ENCODE measurements at regions of chr6 and their contacts with region 1.

Region 1: GRCh38 chr6:35731736-35732532 is 4.9 kb upstream of the ARMC12 start:
- DNase-seq: peak; percentile 97
- ATAC-seq: peak; percentile 62
- H3K4me3 Mint-ChIP-seq: peak overlapping the region; percentile 88
- H3K27ac Mint-ChIP-seq: peak overlapping the region; percentile 99
- H3K4me1 Mint-ChIP-seq: peaks cover 49% of the 10 kb centered on the region
- H3K27me3 Mint-ChIP-seq: no peaks in the 10 kb centered on the region

Region 2: DNA sequence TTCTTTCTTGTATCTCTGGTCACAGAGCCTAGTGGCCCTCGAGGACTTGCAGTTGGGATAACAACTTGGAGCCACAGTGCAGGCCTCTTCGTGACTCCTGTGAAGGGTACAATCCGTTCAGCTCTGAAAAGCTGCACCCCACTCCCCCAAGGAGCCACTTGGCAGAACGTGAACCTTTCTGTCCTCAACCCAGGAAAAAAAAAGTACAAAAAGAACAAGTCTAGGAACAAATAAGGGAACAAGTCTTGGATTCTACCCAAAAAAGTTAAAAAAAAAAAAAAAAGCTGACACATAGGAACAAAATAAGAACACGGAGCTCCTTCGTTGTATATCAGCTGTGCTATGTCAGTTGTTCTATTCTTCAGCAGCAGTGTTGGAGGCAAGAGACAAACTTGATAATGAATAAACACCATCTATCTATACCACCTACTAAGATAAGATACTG is 141.3 kb before region 1 on chr6:
- POLR2A ChIA-PET with region 1: interaction called, 10 read pairs
- DNase-seq: no peak
- ATAC-seq: no peak
- H3K4me3 Mint-ChIP-seq: no peak overlapping the region
- H3K27ac Mint-ChIP-seq: peak overlapping the region; percentile 27
- H3K4me1 Mint-ChIP-seq: peaks cover 39% of the 10 kb centered on the region
- H3K27me3 Mint-ChIP-seq: no peaks in the 10 kb centered on the region

Region 3: GRCh38 chr6:35669451-35670045 is 62.4 kb before region 1 on chr6:
- POLR2A ChIA-PET with region 1: interaction called, 19 read pairs
- DNase-seq: no peak
- ATAC-seq: peak; percentile 72
- H3K4me3 Mint-ChIP-seq: peak overlapping the region; percentile 75
- H3K27ac Mint-ChIP-seq: peak overlapping the region; percentile 87
- H3K4me1 Mint-ChIP-seq: peaks cover 29% of the 10 kb centered on the region
- H3K27me3 Mint-ChIP-seq: no peaks in the 10 kb centered on the region

Region 4: DNA sequence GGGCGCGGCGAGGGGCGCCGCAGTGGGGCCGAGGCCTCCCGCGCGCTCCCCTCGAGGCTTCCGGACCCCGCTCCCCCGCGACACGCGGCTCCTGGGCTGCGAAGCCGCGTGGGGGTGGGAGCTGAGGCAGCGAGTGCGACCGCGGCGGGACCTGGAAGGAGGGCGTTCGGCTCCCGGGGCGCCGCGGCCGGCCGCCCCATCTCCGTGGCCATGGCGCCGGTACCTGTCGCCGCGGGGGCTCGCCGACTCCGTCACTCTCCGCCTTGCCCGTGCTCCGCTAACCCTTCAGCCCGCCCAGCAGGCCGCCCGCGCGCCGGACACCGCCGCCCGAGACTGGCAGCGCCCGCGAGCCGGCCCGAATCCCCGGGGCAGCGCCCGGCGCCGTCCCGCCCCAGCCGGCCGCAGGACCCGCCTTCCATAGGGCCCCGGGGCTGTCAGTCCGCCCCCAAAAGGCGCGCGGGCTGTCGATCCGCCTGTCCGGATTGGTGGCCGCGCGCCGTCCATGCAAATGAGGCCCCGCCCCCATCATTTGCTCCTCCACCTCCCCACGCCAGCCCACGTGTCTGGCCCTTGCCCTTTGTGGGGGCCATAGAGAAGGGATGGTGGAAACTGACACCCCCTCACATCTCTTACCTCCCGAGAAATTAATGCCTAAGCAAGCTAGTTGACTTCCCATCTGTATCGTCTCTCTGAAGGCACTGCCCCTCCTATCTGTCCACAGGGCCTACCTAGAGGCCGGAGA is 43.2 kb before region 1 on chr6 and contains the start of gene FKBP5:
- POLR2A ChIA-PET with region 1: interaction called, 25 read pairs
- DNase-seq: peak; percentile 92
- ATAC-seq: peak; percentile 92
- H3K4me3 Mint-ChIP-seq: peak within 1 kb of the TSS; percentile 100
- H3K27ac Mint-ChIP-seq: peak within 1 kb of the TSS; percentile 98
- H3K4me1 Mint-ChIP-seq: peaks cover 8% of the 10 kb centered on the region
- H3K27me3 Mint-ChIP-seq: no peaks in the 10 kb centered on the region
- total RNA-seq, gene FKBP5: 78.6 to 79.8 TPM

Region 5: DNA sequence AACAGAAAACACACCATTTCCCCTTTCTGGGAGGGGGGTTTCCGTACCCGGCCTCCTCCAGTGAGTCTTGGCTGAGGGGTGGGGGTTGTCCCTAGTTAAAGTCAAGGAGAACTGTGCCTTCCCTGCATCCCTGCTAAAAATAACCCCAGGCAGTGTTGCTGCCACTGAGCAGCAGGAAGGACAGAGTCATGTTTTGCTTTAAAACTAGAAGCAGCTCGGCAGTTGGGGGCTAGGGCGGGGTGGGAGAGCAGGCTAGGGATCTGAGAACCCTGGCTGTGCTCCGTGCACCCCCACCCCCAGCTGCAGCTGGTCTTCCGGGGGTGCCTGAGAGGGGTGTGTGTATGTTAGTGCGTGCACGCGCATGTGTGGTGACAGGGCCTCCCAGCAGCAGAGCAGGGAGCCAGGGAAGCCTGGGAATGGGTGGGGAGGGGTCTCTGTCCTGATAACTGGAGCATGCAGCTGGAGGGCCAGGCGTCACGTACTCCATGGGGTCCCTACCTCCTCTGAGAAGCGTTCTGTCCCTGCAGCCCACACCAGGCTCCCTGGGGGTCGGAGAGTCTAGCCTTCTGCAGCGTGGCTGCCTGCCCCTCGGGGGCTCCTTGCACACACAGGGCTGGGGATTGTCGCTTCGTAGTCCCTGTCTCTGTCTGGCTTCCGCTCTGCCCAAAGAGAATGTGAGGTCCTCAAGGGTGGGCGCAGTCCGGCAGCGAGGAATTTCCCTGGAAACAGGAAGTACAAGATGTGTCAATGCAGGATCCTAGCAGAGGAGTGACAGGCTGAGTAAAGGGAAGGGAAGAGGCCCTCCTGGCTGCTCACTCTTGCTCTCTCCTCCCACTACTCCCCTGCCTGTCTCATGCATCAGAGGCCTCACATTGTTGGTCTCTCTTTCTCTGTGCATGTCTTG is 11.9 kb before region 1 on chr6:
- POLR2A ChIA-PET with region 1: interaction called, 14 read pairs
- DNase-seq: peak; percentile 53
- ATAC-seq: peak; percentile 48
- H3K4me3 Mint-ChIP-seq: peak overlapping the region; percentile 65
- H3K27ac Mint-ChIP-seq: peak overlapping the region; percentile 91
- H3K4me1 Mint-ChIP-seq: peaks cover 39% of the 10 kb centered on the region
- H3K27me3 Mint-ChIP-seq: no peaks in the 10 kb centered on the region

Measured in activated naive CD8-positive, alpha-beta T cell treated with anti-CD3 and anti-CD28 coated beads, Interleukin-2, amount 10 ng/mL, durations not matched to agents 7 days and 5 days (primary cell).